ENCODE measurements at regions of chr6 and their contacts with region 1.

Region 1: GRCh38 chr6:56595490-56596122 is 47.1 kb downstream of the DST start:
- DNase-seq: peak in 3 of 7 donors; percentile 27 to 38 (median 36)
- H3K4me3 ChIP-seq: no peak overlapping the region
- H3K27ac ChIP-seq: no peak overlapping the region
- H3K4me1 ChIP-seq: peaks cover 0 to 13% of the 10 kb centered on the region in 2 donors
- H3K27me3 ChIP-seq: no peaks in the 10 kb centered on the region
- CTCF ChIP-seq: peak; percentile 48 to 64 (median 54)
- POLR2A ChIP-seq: no peak

Region 2: GRCh38 chr6:56364827-56365313 is 230.7 kb before region 1 on chr6:
- intact Hi-C with region 1: loop called (anchors 5 kb)
- DNase-seq: no peak
- H3K4me3 ChIP-seq: no peak overlapping the region
- H3K27ac ChIP-seq: peak overlapping the region in 2 of 5 donors; percentile 11 to 32
- H3K4me1 ChIP-seq: peaks cover 10 to 28% of the 10 kb centered on the region in 2 donors
- H3K27me3 ChIP-seq: no peaks in the 10 kb centered on the region
- CTCF ChIP-seq: no peak
- POLR2A ChIP-seq: no peak

Region 3: GRCh38 chr6:56463443-56463842 is 132.2 kb before region 1 on chr6:
- intact Hi-C with region 1: loop called in 1 of 2 experiments (anchors 10 kb)
- DNase-seq: no peak
- H3K4me3 ChIP-seq: no peak overlapping the region
- H3K27ac ChIP-seq: no peak overlapping the region
- H3K4me1 ChIP-seq: no peaks in the 10 kb centered on the region
- H3K27me3 ChIP-seq: no peaks in the 10 kb centered on the region
- CTCF ChIP-seq: no peak
- POLR2A ChIP-seq: no peak

Region 4: DNA sequence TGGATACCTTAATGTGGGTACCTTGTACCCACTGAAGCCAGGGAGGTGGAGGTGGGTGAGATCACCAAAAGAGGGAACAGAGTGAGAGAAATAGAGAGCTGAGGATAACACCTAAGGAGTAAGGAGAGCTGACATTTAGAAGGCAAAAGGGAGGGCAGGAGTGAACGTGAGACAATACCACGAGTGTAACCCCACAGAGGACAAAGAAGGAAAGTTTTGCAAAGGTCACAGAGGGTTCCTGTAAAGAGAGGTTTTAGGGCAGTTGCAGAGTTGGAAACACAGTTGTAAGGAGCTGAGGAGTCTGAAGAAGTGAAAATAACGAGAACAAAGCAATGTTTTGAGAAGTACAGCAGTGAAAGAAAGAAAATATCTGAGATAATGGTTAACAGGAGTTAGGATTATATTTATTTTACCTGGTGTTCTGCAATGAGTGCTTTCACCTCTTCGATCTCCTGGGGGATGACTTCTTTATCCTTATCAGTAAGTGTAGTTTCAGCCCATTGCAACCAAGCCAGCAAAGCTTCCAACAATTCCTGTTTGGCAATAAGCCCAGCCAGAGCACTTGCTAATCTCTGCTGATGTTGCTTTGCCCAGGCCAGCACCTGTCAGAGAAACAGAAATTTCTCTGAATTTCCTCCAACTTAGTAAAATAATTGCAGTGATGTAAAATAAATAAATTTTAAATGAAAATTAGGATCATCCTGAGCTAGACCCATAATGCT is 119.7 kb before region 1 on chr6:
- intact Hi-C with region 1: loop called in 1 of 2 experiments (anchors 10 kb)
- DNase-seq: peak; percentile 59 to 89 (median 80)
- H3K4me3 ChIP-seq: no peak overlapping the region
- H3K27ac ChIP-seq: peak overlapping the region in 2 of 5 donors; percentile 27 to 52
- H3K4me1 ChIP-seq: peaks cover 16 to 21% of the 10 kb centered on the region in 2 donors
- H3K27me3 ChIP-seq: no peaks in the 10 kb centered on the region
- CTCF ChIP-seq: no peak
- POLR2A ChIP-seq: no peak

Region 5: DNA sequence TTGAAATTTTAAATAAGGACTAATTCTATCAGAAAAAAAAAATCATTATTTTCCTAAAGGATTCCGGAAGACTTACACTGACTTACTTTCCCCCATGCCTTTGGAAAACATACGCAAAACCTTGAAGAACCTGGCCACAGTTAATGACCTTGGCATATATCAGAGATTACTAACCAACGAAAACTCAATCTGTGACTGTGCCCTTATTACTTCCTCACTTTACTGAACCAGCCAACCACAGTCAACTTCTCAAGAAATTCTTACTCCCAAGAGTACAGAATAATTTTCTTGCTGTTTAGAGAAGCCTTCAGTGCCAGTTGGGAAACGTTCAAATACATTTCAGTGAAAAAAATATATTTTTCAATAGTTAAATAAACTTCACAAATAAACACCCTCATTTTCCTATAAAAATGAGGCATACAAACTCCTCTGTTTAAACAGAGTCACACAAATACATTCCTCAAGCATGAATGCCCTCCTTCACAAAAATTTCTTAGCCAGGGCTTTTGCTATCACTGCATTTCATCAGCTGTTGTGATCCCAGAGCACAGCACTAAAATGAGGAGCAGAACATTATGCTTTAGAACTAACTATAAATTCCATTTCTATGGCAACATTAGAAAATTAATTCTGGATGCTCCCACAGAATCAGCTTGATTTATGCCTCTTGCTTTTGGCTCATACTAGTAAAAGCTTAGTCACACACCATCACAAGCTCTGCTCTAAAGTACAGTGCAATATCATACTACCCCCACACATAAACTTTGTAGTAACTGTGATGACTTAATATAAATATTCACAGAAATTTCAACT is 70.5 kb before region 1 on chr6:
- intact Hi-C with region 1: no loop called
- DNase-seq: no peak
- H3K4me3 ChIP-seq: no peak overlapping the region
- H3K27ac ChIP-seq: peak overlapping the region in 4 of 5 donors; percentile 49 to 83 (median 68)
- H3K4me1 ChIP-seq: peaks cover 19 to 51% of the 10 kb centered on the region in 2 donors
- H3K27me3 ChIP-seq: no peaks in the 10 kb centered on the region
- CTCF ChIP-seq: no peak
- POLR2A ChIP-seq: peak in 1 of 2 donors; percentile 37